Activated CD4-positive, alpha-beta T cell treated with anti-CD3 and anti-CD28 coated beads for 36 hours (primary cell): ENCODE measurements at regions of chr3 and their contacts with region 1.

Region 1: DNA sequence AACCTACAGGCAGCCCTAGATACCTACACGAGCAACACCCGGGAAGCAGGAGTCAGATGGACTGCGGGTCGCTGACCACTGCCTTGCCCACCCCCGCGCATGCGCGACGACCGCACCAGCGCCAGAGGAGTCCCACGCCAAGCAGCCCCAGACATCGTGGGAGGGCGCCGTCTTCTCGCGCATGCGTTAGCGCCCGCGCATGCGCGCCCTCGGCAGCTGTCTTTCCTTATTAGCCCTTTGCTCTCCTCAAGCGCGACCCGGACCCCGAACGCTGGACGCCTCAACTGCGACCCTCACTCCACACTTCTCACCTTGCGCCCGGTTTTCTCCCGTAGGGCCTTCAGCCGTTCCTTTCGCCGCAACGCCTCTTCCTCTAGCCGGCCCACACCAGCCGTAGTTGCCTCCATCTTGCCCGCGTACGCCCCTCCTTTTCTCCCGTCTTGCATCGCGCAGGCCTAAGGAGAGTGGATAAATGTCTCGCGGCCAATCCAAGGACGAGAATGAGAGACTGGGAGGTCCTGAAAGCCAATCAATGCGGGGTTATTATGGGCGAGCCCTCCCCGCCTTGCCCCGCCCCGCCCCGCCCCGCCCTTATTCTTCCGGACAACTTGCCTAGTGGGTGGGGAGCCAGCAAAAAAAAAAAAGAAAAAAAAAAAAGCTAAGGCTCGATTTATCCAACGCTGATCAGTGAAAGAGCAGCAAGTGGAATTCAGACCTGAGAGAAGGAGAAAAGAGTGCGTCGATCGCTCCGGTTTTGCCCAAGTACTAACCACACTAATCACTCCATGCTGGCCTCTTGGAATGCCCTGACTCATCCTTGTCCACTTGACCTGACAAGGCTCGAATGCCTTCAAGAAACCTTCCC is at the start of gene CCDC12:
- DNase-seq: peak; percentile 96
- ATAC-seq: peak; percentile 82
- H3K4me3 Mint-ChIP-seq: peak within 1 kb of the TSS; percentile 92
- H3K27ac Mint-ChIP-seq: peak within 1 kb of the TSS; percentile 99
- H3K4me1 Mint-ChIP-seq: peaks cover 66% of the 10 kb centered on the region
- H3K27me3 Mint-ChIP-seq: no peaks in the 10 kb centered on the region
- total RNA-seq, gene CCDC12: 45.4 to 47.8 TPM

Region 2: GRCh38 chr3:45688882-45689756 is 1287.4 kb before region 1 on chr3 and contains the start of gene SACM1L:
- CTCF ChIA-PET with region 1: no interaction called
- POLR2A ChIA-PET with region 1: no interaction called
- intact Hi-C with region 1: loop called in 1 of 2 experiments (anchors 5 kb)
- DNase-seq: peak; percentile 98
- ATAC-seq: peak; percentile 85
- H3K4me3 Mint-ChIP-seq: peak within 1 kb of the TSS; percentile 79
- H3K27ac Mint-ChIP-seq: peak within 1 kb of the TSS; percentile 97
- H3K4me1 Mint-ChIP-seq: peaks cover 46% of the 10 kb centered on the region
- H3K27me3 Mint-ChIP-seq: peaks cover 2% of the 10 kb centered on the region
- total RNA-seq, gene SACM1L: 34.2 to 51.8 TPM

Region 3: GRCh38 chr3:46359733-46360493 is 616.6 kb before region 1 on chr3:
- CTCF ChIA-PET with region 1: no interaction called
- POLR2A ChIA-PET with region 1: no interaction called
- intact Hi-C with region 1: no loop called
- DNase-seq: peak; percentile 57
- ATAC-seq: peak; percentile 95
- H3K4me3 Mint-ChIP-seq: no peak overlapping the region
- H3K27ac Mint-ChIP-seq: no peak overlapping the region
- H3K4me1 Mint-ChIP-seq: peaks cover 27% of the 10 kb centered on the region
- H3K27me3 Mint-ChIP-seq: peaks cover 42% of the 10 kb centered on the region

Region 4: GRCh38 chr3:46959161-46959511 is 17.4 kb before region 1 on chr3:
- CTCF ChIA-PET with region 1: no interaction called
- POLR2A ChIA-PET with region 1: interaction called, 5 read pairs
- intact Hi-C with region 1: loop called in 1 of 2 experiments (anchors 1 kb)
- DNase-seq: peak; percentile 71
- ATAC-seq: peak; percentile 92
- H3K4me3 Mint-ChIP-seq: peak overlapping the region; percentile 2
- H3K27ac Mint-ChIP-seq: peak overlapping the region; percentile 88
- H3K4me1 Mint-ChIP-seq: peaks cover 86% of the 10 kb centered on the region
- H3K27me3 Mint-ChIP-seq: no peaks in the 10 kb centered on the region

Region 5: DNA sequence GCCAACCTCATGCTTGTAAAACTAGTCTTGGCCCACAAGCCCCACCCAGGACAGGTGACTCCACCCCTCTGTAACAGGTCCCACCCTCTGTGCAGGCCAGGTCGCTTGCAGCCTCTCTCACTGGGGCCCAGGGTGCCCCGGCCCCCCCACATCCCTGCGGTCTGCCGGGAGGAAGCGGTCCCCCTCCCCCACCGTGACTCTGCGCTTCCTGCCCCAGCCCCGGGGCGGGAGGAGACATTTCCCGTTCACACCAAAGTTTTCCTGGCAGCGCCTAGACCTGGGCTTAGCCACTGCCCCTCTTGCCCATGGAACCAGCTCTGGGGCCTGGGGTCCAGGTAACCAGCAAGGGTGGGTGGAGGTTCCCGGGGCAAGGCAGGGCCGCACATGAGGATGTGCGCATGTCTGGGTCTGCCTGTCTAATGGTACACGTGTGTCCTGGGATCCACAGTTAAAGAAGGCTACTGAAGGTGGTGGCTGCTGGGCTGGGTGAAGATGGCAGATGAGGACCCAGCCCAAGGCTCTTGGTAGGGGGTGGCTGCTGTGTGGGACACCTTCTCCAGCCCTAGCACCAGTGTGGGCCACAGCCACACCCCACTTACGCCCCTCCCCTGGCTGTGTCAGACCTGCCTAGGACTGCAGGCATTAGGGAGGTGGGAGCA is 11.3 kb after region 1 on chr3:
- CTCF ChIA-PET with region 1: interaction called, 3 read pairs
- POLR2A ChIA-PET with region 1: no interaction called
- intact Hi-C with region 1: loop called (anchors 1 kb)
- DNase-seq: peak; percentile 92
- ATAC-seq: peak; percentile 98
- H3K4me3 Mint-ChIP-seq: peak overlapping the region; percentile 77
- H3K27ac Mint-ChIP-seq: peak overlapping the region; percentile 95
- H3K4me1 Mint-ChIP-seq: peaks cover 57% of the 10 kb centered on the region
- H3K27me3 Mint-ChIP-seq: no peaks in the 10 kb centered on the region

Region 6: DNA sequence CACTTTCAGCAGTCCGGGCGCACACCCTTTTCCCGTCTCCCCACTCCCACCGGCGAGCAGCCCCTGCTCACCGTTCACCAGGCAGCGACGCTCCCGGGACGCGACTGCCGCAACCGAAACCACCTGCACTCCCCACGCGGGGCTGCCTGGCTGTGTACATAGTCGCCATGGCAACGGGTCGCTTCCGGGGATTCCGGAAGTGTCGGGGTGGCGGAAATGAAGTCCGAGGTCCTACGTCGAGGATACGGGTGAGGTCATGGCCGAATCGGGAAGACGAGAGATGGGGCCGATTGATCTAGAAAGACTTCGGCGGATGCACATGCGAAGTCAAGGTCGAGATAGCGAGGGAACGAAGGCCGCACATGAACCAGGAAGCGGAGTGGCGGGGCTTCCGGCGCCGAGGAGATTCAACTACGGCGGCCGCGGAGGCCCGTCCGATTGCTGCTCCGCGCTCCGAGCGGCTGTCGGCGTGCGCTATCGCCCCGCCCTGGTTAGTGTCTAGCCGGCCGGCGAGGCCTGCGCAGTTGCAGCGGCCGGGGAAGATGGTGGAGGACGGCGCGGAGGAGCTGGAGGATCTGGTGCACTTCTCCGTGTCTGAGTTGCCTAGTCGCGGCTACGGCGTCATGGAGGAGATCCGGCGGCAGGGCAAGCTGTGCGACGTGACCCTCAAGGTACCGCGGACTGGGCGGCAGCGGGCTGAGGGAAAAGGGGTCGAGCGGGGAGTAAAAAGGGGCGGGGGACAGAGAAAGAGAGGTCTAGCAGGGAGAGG is 306.1 kb after region 1 on chr3 and contains the starts of genes KIF9 and KLHL18:
- CTCF ChIA-PET with region 1: no interaction called
- POLR2A ChIA-PET with region 1: no interaction called
- intact Hi-C with region 1: loop called in 1 of 2 experiments (anchors 1 kb)
- DNase-seq: peak; percentile 97
- ATAC-seq: peak; percentile 91
- H3K4me3 Mint-ChIP-seq: peak within 1 kb of the TSS; percentile 95
- H3K27ac Mint-ChIP-seq: peak within 1 kb of the TSS; percentile 99
- H3K4me1 Mint-ChIP-seq: peaks cover 31% of the 10 kb centered on the region
- H3K27me3 Mint-ChIP-seq: no peaks in the 10 kb centered on the region
- total RNA-seq, gene KIF9: 2.7 to 5.3 TPM
- total RNA-seq, gene KLHL18: 19.0 to 22.4 TPM

Region 7: DNA sequence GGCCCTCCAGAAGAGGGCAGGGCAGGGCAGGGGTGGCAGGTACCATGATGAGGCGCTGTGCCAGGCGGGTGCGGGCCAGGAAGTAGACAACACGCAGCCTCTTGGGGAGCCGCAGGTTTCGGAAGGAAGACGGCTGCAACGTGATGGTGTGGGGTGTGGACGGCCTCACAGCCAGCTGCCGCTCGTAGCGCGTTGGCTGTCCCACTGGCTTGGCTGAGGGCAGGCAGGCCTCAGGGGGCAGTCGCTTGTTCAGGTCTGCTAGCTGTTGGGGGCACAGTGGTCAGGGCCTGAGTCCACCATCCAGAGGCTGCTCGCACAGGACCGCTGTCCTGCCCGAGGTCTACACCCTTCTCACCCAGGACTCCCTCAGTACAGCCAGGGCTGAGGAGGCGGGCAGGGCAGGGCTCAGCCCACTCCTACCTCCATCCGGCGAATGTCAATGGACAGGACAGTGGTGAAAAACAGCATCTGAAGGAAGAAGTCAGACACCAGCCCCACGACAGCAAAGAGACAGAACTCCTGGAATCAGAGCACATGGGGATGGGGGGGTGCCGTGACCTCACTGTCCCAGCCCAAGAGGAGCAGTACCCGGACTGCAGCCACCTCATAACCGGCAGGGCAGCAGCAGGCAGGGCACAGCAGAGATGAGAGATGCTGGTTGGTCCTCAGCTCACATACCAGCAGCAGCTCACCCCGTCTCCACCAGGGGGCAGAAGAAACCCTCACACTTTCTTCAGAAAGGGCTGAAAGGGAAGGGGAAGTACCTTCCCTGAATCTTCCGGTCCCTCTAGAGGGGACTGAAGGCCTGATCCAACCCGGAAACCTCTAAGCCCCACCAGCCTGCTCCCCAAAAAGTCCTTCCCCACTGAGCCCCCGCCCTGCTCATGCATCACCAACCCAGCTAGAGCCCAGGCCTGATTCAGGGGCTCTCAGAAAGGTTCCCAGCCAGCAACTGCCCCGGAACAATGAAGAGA is 444.2 kb after region 1 on chr3:
- CTCF ChIA-PET with region 1: no interaction called
- POLR2A ChIA-PET with region 1: no interaction called
- intact Hi-C with region 1: no loop called
- DNase-seq: peak; percentile 95
- ATAC-seq: peak; percentile 97
- H3K4me3 Mint-ChIP-seq: peak overlapping the region; percentile 17
- H3K27ac Mint-ChIP-seq: peak overlapping the region; percentile 99
- H3K4me1 Mint-ChIP-seq: peaks cover 10% of the 10 kb centered on the region
- H3K27me3 Mint-ChIP-seq: no peaks in the 10 kb centered on the region

Region 8: GRCh38 chr3:47802734-47803477 is 826.3 kb after region 1 on chr3 and contains the start of gene DHX30:
- CTCF ChIA-PET with region 1: no interaction called
- POLR2A ChIA-PET with region 1: no interaction called
- intact Hi-C with region 1: loop called in 1 of 2 experiments (anchors 2 kb)
- DNase-seq: peak; percentile 93
- ATAC-seq: peak; percentile 92
- H3K4me3 Mint-ChIP-seq: peak within 1 kb of the TSS; percentile 96
- H3K27ac Mint-ChIP-seq: peak within 1 kb of the TSS; percentile 98
- H3K4me1 Mint-ChIP-seq: peaks cover 24% of the 10 kb centered on the region
- H3K27me3 Mint-ChIP-seq: no peaks in the 10 kb centered on the region
- total RNA-seq, gene DHX30: 81.6 to 82.3 TPM